ENCODE measurements at regions of chr2 and their contacts with region 1.

Region 1: DNA sequence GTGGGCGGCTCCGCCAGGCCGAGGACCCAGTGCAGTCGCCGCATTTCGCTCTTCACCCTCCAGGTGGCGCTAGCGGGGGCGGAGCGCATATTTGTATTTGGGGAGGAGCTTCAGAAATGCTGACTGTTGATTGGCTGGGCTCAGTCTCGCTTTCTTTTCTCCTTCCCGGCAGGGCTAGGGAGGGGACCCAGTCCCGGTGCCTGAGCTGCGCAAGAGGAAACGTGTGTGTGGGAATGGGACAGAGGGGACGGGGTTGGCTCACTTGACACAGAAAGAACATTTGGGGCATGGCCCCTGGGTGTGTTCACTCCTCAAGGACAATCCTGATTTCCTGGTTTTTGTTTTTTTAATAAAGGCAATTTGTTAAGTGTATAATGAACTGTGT is 20.3 kb upstream of the DNMT3A start:
- DNase-seq: peak; percentile 90 to 95 (median 93)
- H3K4me3 ChIP-seq: peak overlapping the region; percentile 67 to 70
- H3K4me3 Mint-ChIP-seq: peak overlapping the region; percentile 88 to 94 (median 91)
- H3K27ac ChIP-seq: peak overlapping the region; percentile 69
- H3K27ac Mint-ChIP-seq: peak overlapping the region; percentile 78 to 97 (median 91)
- H3K4me1 ChIP-seq: peaks cover 11% of the 10 kb centered on the region
- H3K4me1 Mint-ChIP-seq: peaks cover 9 to 37% (median 14%) of the 10 kb centered on the region in 4 donors
- H3K27me3 ChIP-seq: no peaks in the 10 kb centered on the region
- H3K27me3 Mint-ChIP-seq: no peaks in the 10 kb centered on the region

Region 2: DNA sequence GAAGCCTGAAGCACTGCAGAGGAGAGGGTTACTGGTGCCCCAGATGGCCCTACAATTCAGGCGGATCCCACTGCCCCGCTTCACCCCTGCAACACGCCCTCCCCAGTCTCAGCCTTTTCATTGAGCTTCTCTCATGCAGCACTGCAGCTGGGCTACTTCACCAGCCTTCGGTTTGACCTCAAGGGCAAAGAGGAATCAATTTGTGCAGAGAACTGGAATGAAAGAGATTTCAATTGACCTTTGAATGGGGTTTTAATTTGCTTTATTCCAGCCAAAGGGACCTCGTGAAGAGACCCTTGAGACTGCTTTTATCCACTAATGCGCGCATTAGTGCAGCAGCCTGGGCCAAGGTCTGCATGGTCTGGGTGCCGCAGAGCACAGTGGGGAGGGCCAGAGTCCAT is 184.8 kb before region 1 on chr2:
- CTCF ChIA-PET with region 1: no interaction called
- POLR2A ChIA-PET with region 1: no interaction called
- intact Hi-C with region 1: no loop called
- DNase-seq: no peak
- H3K4me3 ChIP-seq: no peak overlapping the region
- H3K4me3 Mint-ChIP-seq: no peak overlapping the region
- H3K27ac ChIP-seq: no peak overlapping the region
- H3K27ac Mint-ChIP-seq: no peak overlapping the region
- H3K4me1 ChIP-seq: no peaks in the 10 kb centered on the region
- H3K4me1 Mint-ChIP-seq: peaks cover 0 to 6% (median 0%) of the 10 kb centered on the region in 4 donors
- H3K27me3 ChIP-seq: peaks cover 3% of the 10 kb centered on the region
- H3K27me3 Mint-ChIP-seq: peaks cover 11 to 13% of the 10 kb centered on the region in 2 donors

Region 3: DNA sequence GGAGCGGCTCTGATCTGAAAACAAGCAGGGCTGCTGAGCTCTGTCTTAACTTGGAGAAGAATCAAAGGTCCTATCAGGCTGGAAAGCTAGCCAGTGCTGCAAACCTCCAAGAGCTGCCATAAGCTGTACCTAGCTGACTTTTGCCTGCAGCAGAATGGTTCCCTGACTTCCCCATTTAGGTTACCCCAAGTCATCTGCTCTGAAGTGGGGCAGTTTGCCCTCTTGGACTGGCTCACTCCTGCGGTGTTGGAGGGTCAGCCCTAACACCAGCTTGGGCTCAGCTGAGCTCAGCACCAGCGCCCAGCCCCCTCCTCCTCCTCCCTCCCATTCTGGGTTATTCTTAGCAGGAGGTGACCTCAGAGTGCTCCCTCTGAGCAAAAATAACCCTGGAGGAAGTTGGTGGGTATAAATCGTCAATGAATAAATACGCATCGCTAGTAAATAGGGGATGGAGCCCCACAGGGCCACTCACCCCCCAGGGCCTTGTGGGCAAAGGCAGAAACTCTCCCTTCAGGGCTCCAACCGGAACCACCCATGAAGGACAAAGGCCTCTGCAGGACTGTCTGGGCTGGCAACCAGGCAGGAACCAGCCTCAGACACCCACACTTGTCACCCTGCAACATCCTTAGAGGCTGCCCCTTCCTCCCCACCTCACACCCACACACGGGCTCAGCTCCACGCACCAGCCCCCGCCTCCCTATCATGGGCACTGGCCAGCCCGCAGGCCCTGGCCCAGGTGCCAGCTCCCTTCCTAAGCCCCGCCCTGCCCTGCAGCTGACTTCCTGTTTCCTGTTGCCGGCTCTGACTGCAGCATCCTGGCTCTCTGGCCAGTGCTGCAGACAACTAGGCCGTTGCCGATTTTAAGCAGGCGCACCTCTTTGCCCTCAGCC is 67.2 kb before region 1 on chr2:
- CTCF ChIA-PET with region 1: interaction called, 9 read pairs
- POLR2A ChIA-PET with region 1: interaction called, 12 read pairs
- intact Hi-C with region 1: no loop called
- DNase-seq: peak; percentile 73 to 90 (median 76)
- H3K4me3 ChIP-seq: peak overlapping the region; percentile 32 to 39
- H3K4me3 Mint-ChIP-seq: peak overlapping the region; percentile 72 to 90 (median 82)
- H3K27ac ChIP-seq: peak overlapping the region; percentile 69
- H3K27ac Mint-ChIP-seq: peak overlapping the region; percentile 86 to 97 (median 93)
- H3K4me1 ChIP-seq: peaks cover 52% of the 10 kb centered on the region
- H3K4me1 Mint-ChIP-seq: peaks cover 28 to 43% (median 37%) of the 10 kb centered on the region in 4 donors
- H3K27me3 ChIP-seq: no peaks in the 10 kb centered on the region
- H3K27me3 Mint-ChIP-seq: no peaks in the 10 kb centered on the region

Region 4: DNA sequence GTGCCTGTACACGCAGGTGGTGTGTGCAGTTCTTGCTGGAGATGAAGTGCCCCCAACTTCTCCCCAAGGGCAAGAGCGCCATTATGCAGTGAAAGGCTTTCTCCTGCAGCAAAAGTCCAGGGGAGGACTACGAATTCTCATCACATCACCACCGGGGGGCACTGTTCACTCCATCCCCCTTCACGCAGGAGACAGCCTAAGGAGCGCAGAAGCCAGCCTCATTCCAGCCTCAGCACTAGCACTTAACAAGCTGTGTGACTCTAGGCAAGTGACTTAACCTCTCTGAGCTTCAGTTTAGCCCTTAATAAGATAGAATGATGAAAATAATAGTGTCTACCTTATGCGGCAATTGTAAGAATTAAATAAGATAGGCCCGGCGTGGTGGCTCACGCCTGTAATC is 52.6 kb before region 1 on chr2:
- CTCF ChIA-PET with region 1: interaction called, 33 read pairs
- POLR2A ChIA-PET with region 1: interaction called, 20 read pairs
- intact Hi-C with region 1: loop called (anchors 1 kb)
- DNase-seq: peak; percentile 53 to 60 (median 58)
- H3K4me3 ChIP-seq: no peak overlapping the region
- H3K4me3 Mint-ChIP-seq: no peak overlapping the region
- H3K27ac ChIP-seq: no peak overlapping the region
- H3K27ac Mint-ChIP-seq: peak overlapping the region in 6 of 7 donors; percentile 55 to 88 (median 75)
- H3K4me1 ChIP-seq: peaks cover 88% of the 10 kb centered on the region
- H3K4me1 Mint-ChIP-seq: peaks cover 33 to 90% (median 65%) of the 10 kb centered on the region in 4 donors
- H3K27me3 ChIP-seq: no peaks in the 10 kb centered on the region
- H3K27me3 Mint-ChIP-seq: no peaks in the 10 kb centered on the region

Region 5: GRCh38 chr2:25323042-25323514 is 39.0 kb before region 1 on chr2:
- CTCF ChIA-PET with region 1: interaction called, 12 read pairs
- POLR2A ChIA-PET with region 1: interaction called, 7 read pairs
- intact Hi-C with region 1: no loop called
- DNase-seq: peak; percentile 51 to 79 (median 64)
- H3K4me3 ChIP-seq: peak overlapping the region in 1 of 2 donors; percentile 46
- H3K4me3 Mint-ChIP-seq: peak overlapping the region; percentile 85 to 91 (median 88)
- H3K27ac ChIP-seq: peak overlapping the region; percentile 53
- H3K27ac Mint-ChIP-seq: peak overlapping the region; percentile 81 to 98 (median 94)
- H3K4me1 ChIP-seq: peaks cover 33% of the 10 kb centered on the region
- H3K4me1 Mint-ChIP-seq: peaks cover 33 to 51% (median 39%) of the 10 kb centered on the region in 4 donors
- H3K27me3 ChIP-seq: no peaks in the 10 kb centered on the region
- H3K27me3 Mint-ChIP-seq: no peaks in the 10 kb centered on the region

Region 6: DNA sequence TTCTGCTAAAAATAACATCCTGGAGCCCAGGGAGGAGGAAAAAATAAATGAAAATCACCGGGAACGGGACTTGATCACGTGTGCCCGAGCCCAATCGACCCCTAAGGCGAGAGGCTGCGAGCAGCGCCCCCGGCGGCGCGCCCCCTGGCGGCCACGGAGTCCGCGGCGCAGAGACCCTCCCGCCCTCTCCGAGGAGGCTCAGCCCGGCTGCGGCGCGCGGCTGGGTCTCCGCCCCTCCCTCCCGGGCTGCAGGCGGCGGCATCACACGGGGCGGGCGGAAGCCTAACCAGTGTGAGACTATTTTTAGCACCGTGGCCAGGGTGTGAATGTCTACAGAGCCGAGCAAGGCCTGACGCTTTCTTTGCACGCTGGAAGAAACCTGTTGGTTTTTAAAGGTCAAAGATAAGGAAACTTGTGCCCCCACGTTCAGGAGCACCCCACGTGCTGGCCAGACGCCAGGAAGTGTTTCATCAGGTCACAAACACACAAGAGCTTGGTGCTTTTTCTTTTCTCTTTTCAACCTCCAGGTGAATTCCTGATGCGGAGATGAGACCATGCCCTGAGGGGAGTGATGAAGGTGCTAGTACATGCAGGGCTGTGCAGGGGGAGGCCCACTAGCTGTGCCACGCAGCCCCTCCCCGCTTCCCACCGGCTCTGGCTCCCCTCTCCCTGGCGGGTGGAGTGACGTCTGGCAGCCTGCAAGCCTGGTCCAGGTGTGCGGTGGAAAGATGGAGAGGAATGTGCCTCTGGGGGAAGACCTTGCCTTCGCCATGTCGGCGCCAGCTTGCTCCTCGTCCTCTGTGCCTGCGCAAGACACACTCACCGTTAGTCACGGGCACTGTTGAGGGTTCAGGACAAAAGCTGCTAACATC is 14.9 kb after region 1 on chr2:
- CTCF ChIA-PET with region 1: interaction called, 161 read pairs
- POLR2A ChIA-PET with region 1: interaction called, 54 read pairs
- intact Hi-C with region 1: loop called (anchors 1 kb)
- DNase-seq: peak; percentile 92 to 95 (median 92)
- H3K4me3 ChIP-seq: peak overlapping the region in 1 of 2 donors; percentile 36
- H3K4me3 Mint-ChIP-seq: peak overlapping the region; percentile 48 to 85 (median 74)
- H3K27ac ChIP-seq: peak overlapping the region; percentile 57
- H3K27ac Mint-ChIP-seq: peak overlapping the region; percentile 90 to 96 (median 94)
- H3K4me1 ChIP-seq: peaks cover 38% of the 10 kb centered on the region
- H3K4me1 Mint-ChIP-seq: peaks cover 19 to 36% (median 23%) of the 10 kb centered on the region in 4 donors
- H3K27me3 ChIP-seq: no peaks in the 10 kb centered on the region
- H3K27me3 Mint-ChIP-seq: no peaks in the 10 kb centered on the region

Region 7: DNA sequence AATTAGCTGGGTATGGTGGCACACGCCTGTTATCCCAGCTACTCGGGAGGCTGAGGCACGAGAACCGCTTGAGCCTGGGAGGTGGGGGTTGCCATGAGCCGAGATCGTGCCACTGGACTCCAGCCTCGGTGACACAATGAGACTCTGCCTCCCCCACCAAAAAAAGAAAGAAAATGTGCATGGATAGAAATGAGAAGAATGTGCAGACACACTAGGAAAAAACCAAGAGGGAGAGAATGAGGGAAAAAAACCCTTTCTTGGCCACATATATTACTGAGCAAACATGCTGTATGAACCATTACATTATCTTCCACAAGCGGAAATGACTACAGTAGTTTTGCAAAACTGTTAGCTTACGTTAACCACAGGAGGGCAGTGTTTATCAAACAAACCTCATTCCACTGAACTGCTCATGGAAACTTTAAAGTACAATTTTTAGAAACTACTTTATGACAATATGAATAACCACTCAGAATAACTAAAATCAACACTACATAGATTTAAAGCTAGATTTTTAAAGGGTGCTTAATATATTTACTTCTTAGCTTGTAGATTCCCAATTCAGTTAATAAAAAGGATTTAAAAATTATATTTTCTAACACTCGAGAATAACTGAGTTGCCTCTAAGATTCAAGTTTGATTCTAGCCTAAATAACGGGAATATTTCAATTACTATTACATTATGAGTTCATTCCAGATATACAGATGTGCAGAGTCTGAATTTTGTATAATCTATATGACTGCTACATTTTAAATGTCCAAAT is 489.9 kb after region 1 on chr2:
- CTCF ChIA-PET with region 1: no interaction called
- POLR2A ChIA-PET with region 1: no interaction called
- intact Hi-C with region 1: no loop called
- DNase-seq: peak; percentile 66 to 79 (median 72)
- H3K4me3 ChIP-seq: peak overlapping the region in 1 of 2 donors; percentile 13
- H3K4me3 Mint-ChIP-seq: peak overlapping the region; percentile 59 to 87 (median 80)
- H3K27ac ChIP-seq: peak overlapping the region; percentile 52
- H3K27ac Mint-ChIP-seq: peak overlapping the region; percentile 63 to 97 (median 84)
- H3K4me1 ChIP-seq: peaks cover 48% of the 10 kb centered on the region
- H3K4me1 Mint-ChIP-seq: peaks cover 37 to 50% (median 43%) of the 10 kb centered on the region in 4 donors
- H3K27me3 ChIP-seq: no peaks in the 10 kb centered on the region
- H3K27me3 Mint-ChIP-seq: no peaks in the 10 kb centered on the region

Region 8: DNA sequence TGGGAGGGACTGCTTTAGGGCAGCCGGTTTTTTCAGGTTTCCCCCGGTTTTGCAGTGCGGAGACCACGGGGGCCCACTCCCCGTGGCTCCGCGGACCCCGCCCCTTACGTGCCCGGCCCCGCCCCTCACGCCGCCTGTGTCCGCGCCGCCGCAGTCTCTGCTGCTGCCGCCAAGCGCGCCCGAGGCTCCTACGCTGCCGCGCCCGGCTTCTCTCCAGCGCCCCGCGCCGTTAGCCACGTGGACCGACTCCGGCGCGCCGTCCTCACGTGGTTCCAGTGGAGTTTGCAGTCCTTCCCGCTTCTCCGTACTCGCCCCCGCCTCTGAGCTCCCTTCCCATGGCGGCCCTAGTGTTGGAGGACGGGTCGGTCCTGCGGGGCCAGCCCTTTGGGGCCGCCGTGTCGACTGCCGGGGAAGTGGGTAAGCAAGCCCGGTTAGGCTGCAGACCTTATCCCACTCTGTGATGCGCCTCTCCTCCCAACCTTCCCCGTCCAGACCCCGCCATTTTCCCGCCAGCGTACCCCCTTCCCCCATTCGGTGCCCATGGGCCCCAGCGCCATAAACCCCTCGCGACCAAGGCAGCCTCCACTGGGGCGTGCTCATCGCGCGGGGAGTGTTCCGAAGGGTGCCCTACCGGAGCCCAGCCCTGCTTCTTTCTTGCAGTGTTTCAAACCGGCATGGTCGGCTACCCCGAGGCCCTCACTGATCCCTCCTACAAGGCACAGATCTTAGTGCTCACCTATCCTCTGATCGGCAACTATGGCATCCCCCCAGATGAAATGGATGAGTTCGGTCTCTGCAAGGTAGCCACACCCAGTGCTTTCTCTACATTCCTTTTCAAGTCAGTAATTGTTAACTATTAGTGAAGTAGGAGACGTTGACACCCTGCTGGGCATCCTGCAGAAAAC is 1855.4 kb after region 1 on chr2 and contains the start of gene CAD:
- CTCF ChIA-PET with region 1: no interaction called
- POLR2A ChIA-PET with region 1: no interaction called
- intact Hi-C with region 1: loop called (anchors 10 kb)
- DNase-seq: peak; percentile 81 to 85 (median 82)
- H3K4me3 ChIP-seq: peak within 1 kb of the TSS; percentile 37 to 84
- H3K4me3 Mint-ChIP-seq: peak within 1 kb of the TSS; percentile 90 to 97 (median 95)
- H3K27ac ChIP-seq: peak within 1 kb of the TSS; percentile 78
- H3K27ac Mint-ChIP-seq: peak within 1 kb of the TSS; percentile 82 to 97 (median 94)
- H3K4me1 ChIP-seq: peaks cover 29% of the 10 kb centered on the region
- H3K4me1 Mint-ChIP-seq: peaks cover 26 to 42% (median 35%) of the 10 kb centered on the region in 4 donors
- H3K27me3 ChIP-seq: no peaks in the 10 kb centered on the region
- H3K27me3 Mint-ChIP-seq: no peaks in the 10 kb centered on the region
- total RNA-seq, gene CAD: 47.6 to 49.3 TPM

Measured in CD4-positive, alpha-beta memory T cell (primary cell).